Spleen (tissue), 13 donors: ENCODE measurements at regions of chr6 and their contacts with region 1.

Region 1: GRCh38 chr6:32413427-32414047 is 6.6 kb upstream of the BTNL2 start:
- DNase-seq: peak; percentile 95
- H3K4me3 ChIP-seq: no peak overlapping the region
- H3K27ac ChIP-seq: no peak overlapping the region
- H3K4me1 ChIP-seq: peaks cover 0 to 19% (median 14%) of the 10 kb centered on the region in 6 donors
- H3K27me3 ChIP-seq: peaks cover 0 to 59% (median 0%) of the 10 kb centered on the region in 7 donors
- CTCF ChIP-seq: peak; percentile 91 to 97 (median 95)
- POLR2A ChIP-seq: no peak

Region 2: GRCh38 chr6:32244946-32245398 is 168.6 kb before region 1 on chr6:
- intact Hi-C with region 1: loop called (anchors 10 kb)
- DNase-seq: peak; percentile 90
- H3K4me3 ChIP-seq: peak overlapping the region in 4 of 8 donors; percentile 1 to 43 (median 8)
- H3K27ac ChIP-seq: peak overlapping the region; percentile 17 to 76 (median 66)
- H3K4me1 ChIP-seq: peaks cover 0 to 23% (median 16%) of the 10 kb centered on the region in 6 donors
- H3K27me3 ChIP-seq: no peaks in the 10 kb centered on the region
- CTCF ChIP-seq: peak; percentile 81 to 97 (median 93)
- POLR2A ChIP-seq: no peak

Region 3: DNA sequence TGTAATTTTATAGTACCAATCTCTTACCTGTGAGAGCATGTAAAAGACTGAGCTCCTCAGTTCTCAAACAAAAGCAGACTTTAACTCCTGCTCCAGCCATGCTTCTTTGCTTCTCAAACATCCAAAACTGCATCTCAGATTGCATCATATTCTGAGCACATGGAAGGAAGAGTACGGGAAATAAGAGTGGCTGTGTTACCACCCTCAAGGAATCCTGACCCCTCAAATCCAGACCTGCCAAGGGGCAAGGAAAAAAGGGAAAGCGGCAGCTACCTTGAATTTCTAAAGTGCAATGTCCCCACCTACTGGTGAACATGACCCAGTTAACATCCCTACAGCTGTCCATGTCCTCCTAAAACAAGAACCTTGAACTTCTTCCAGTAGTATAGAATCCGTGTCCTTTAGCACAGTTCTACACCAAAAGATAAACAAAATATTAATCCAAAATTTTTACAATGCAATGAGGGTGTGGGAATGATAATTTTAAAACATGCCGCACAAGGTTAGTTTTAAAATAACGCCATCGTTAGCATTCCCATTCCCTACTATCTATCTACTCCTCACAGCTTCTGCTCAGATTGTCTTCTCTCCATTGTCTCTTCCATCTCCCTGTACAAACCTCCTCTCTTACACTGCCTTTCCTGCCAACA is 287.0 kb after region 1 on chr6:
- intact Hi-C with region 1: loop called (anchors 5 kb)
- DNase-seq: no peak
- H3K4me3 ChIP-seq: peak overlapping the region in 1 of 8 donors; percentile 30
- H3K27ac ChIP-seq: peak overlapping the region in 1 of 8 donors; percentile 46
- H3K4me1 ChIP-seq: peaks cover 0 to 8% (median 0%) of the 10 kb centered on the region in 6 donors
- H3K27me3 ChIP-seq: peaks cover 0 to 20% (median 0%) of the 10 kb centered on the region in 7 donors
- CTCF ChIP-seq: peak; percentile 43 to 82 (median 67)
- POLR2A ChIP-seq: no peak

Region 4: DNA sequence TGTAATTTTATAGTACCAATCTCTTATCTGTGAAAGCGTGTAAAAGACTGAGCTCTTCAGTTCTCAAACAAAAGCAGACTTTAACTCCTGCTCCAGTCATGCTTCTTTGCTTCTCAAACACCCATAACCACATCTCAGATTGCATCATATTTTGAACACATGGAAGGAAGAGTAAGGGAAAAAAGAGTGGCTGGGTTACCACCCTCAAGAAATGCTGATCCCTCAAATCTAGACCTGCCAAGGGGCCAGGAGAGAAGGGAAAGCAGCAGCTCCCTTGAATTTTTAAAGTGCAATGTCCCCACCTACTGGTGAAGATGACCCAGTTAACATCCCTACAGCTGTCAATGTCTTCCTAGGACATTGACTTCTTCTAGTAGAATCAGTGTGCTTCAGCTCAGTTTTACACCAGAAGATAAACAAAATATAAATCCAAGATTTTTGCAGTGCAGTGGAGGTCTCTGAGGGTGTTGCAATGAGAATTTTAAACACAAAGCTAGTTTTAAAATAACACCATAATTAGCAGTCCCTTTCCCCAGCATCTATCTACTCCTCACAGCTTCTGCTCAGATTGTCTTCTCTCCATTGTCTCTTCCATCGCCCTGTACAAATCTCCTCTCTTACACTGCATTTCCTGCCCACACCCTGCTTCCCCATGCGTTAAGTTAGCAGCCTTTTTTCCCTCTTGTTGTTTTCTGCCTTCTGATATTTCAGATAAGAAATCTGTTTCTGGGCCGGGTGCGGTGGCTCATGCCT is 372.4 kb after region 1 on chr6:
- intact Hi-C with region 1: loop called (anchors 5 kb)
- DNase-seq: no peak
- H3K4me3 ChIP-seq: no peak overlapping the region
- H3K27ac ChIP-seq: no peak overlapping the region
- H3K4me1 ChIP-seq: peaks cover 0 to 3% (median 0%) of the 10 kb centered on the region in 6 donors
- H3K27me3 ChIP-seq: peaks cover 0 to 11% (median 0%) of the 10 kb centered on the region in 7 donors
- CTCF ChIP-seq: peak in 10 of 11 experiments; percentile 31 to 76 (median 68)
- POLR2A ChIP-seq: no peak

Region 5: DNA sequence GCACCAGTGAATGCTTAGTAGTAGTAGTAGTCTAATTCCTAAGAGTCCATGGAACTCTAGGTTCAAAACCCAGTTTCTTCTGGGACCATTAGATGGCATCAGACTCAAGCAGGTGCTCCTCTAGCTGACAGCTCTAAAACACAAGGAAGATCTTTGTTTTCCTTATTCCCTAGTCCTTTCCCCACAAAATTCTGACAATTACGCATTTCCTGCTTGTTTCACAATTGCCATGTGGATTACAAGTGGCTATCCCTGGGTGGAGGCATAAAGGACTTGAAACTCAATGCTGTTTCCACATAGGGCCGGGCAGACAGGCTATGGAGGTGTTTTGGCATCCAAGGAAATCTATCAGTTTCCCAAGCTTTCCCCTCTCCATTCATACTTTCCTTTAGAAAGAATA is 412.4 kb after region 1 on chr6:
- intact Hi-C with region 1: no loop called
- DNase-seq: no peak
- H3K4me3 ChIP-seq: no peak overlapping the region
- H3K27ac ChIP-seq: peak overlapping the region in 6 of 8 donors; percentile 0 to 46 (median 21)
- H3K4me1 ChIP-seq: peaks cover 0 to 25% (median 8%) of the 10 kb centered on the region in 6 donors
- H3K27me3 ChIP-seq: no peaks in the 10 kb centered on the region
- CTCF ChIP-seq: peak in 3 of 11 experiments; percentile 23 to 24 (median 23)
- POLR2A ChIP-seq: no peak